ENCODE measurements at regions of chr15 and their contacts with region 1.

Region 1: DNA sequence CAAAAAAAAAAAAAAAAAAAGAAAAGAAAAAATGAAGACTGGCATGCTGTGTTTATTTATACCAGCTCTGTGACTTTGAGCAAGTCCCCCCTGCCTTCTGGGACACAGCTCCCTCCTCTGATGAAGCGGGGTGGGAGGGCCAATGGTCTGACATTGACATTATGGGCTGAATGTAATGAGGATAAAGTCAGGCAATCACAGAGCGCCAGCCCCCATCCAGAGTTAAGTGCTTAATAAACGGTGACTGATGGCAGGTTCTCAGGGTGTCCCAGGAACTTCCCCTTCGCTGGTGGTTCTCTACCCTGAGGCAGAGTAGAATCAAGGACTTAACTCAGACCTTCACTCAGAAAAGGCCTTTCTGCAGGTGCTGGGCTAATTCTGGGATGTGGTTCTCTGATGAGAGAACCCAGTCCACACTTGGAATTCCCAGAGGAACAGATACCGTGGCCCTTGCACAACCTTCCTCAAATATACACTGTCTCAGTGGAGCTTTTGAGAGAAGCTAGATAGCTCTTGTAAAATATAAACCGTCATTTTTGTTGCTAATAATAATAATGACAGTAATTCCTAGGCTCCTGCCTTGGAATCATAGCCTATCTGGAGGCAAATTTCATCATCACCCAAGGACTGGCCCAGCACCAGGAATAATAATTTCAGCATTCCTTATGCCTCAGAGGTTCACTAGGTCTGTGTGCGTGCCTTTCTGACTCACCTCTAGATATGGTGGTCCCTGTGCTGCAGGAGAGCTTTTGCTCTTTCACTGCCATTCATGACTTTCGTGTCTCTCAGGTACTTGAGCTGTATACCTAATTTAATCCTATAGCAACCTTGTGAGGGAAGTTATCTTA is 115.8 kb downstream of the RPLP1 start:
- DNase-seq: peak; percentile 36
- H3K4me3 ChIP-seq: no peak overlapping the region
- H3K27ac ChIP-seq: peak overlapping the region; percentile 39
- H3K27me3 ChIP-seq: peaks cover 12% of the 10 kb centered on the region
- CTCF ChIP-seq: no peak

Region 2: GRCh38 chr15:69557340-69558137 is 10.9 kb before region 1 on chr15:
- CTCF ChIA-PET with region 1: interaction called, 4 read pairs
- POLR2A ChIA-PET with region 1: interaction called, 14 read pairs
- DNase-seq: peak; percentile 75
- H3K4me3 ChIP-seq: no peak overlapping the region
- H3K27ac ChIP-seq: peak overlapping the region; percentile 66
- H3K27me3 ChIP-seq: peaks cover 4% of the 10 kb centered on the region
- CTCF ChIP-seq: no peak

Region 3: DNA sequence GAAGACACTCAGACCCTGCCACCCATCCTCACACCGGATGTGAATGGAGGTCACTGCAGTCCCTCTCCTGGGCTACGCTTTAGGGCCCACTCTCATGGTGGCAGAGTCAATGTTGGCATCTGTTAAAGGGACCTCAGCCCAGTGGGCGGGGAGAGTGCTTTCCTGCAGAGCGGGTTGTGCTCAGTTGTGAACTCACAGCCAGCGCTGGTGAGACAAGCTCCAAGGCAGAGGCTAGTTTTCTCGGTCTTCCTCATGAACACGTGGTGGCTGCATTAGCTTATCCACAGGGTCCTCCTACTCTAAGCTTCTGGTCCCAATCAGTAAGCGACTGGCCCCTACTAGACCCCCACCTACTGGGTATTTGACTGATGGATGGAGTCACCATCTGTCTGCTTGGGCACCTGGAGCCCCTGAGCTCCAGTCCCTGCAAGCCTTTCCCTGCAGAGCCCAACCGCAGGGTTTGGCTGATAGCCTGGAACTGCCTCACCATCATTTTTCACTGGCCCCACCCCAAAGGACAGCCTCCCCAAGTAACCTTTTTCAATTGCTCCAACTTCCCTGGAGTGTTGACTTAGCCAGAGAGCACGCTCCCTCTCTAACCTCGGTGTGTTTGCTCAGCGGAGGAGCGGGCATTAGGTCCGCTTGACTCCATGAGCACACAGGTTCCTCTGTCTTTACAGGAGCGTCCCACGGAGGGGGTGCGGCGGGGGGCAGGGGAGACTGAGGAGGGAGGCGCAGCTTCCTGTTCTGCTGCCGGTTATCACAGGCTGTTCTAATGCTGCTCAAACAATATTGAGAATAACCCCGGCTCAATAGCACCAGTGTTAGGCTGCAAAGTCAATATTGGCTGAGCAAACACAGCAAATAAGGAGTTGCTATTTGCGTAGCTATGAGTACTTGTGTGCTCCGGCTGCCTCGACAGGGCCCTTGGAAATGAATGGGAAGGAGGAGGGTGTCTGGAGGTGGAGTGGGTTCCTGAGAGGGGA is 25.9 kb after region 1 on chr15:
- CTCF ChIA-PET with region 1: interaction called, 6 read pairs
- POLR2A ChIA-PET with region 1: interaction called, 11 read pairs
- DNase-seq: no peak
- H3K4me3 ChIP-seq: no peak overlapping the region
- H3K27ac ChIP-seq: no peak overlapping the region
- H3K27me3 ChIP-seq: peaks cover 56% of the 10 kb centered on the region
- CTCF ChIP-seq: no peak

Measured in AG04450 (cell line).